ENCODE measurements at regions of chr6 and their contacts with region 1.

Region 1: GRCh38 chr6:33771146-33772081 is 17.5 kb downstream of the LEMD2 start:
- DNase-seq: peak; percentile 86 to 87
- H3K4me3 ChIP-seq: peak overlapping the region in 3 of 4 experiments; percentile 4 to 16 (median 14); a peak in 3 of 8 replicates
- H3K27ac ChIP-seq: no peak overlapping the region
- H3K4me1 ChIP-seq: peaks cover 10 to 32% (median 21%) of the 10 kb centered on the region in 4 experiments
- H3K27me3 ChIP-seq: no peaks in the 10 kb centered on the region
- CTCF ChIP-seq: peak in 2 of 3 experiments; percentile 76 to 95; a peak in 3 of 4 replicates
- EP300 ChIP-seq: no peak
- POLR2A ChIP-seq: 0 out of 3 replicates have a peak, but pooled peaks of 1 of the 2 experiments have one; percentile 45
- RAD21 ChIP-seq: peak; percentile 86 to 91

Region 2: GRCh38 chr6:33711140-33712129 is 60.0 kb before region 1 on chr6 and contains the start of gene UQCC2:
- CTCF ChIA-PET with region 1: interaction called, 28 read pairs
- POLR2A ChIA-PET with region 1: interaction called, 13 read pairs
- DNase-seq: peak; percentile 93 to 96
- H3K4me3 ChIP-seq: peak within 1 kb of the TSS; percentile 59 to 86 (median 77)
- H3K27ac ChIP-seq: peak within 1 kb of the TSS; percentile 98
- H3K4me1 ChIP-seq: peaks cover 2 to 14% (median 6%) of the 10 kb centered on the region in 4 experiments; a peak in 4 of 7 replicates
- H3K27me3 ChIP-seq: no peaks in the 10 kb centered on the region
- CTCF ChIP-seq: peak; percentile 62 to 76 (median 64)
- EP300 ChIP-seq: no peak
- POLR2A ChIP-seq: peak; percentile 78 to 92
- RAD21 ChIP-seq: peak; percentile 80 to 82
- total RNA-seq, gene UQCC2: 104 and 107 TPM in 2 replicates

Region 3: DNA sequence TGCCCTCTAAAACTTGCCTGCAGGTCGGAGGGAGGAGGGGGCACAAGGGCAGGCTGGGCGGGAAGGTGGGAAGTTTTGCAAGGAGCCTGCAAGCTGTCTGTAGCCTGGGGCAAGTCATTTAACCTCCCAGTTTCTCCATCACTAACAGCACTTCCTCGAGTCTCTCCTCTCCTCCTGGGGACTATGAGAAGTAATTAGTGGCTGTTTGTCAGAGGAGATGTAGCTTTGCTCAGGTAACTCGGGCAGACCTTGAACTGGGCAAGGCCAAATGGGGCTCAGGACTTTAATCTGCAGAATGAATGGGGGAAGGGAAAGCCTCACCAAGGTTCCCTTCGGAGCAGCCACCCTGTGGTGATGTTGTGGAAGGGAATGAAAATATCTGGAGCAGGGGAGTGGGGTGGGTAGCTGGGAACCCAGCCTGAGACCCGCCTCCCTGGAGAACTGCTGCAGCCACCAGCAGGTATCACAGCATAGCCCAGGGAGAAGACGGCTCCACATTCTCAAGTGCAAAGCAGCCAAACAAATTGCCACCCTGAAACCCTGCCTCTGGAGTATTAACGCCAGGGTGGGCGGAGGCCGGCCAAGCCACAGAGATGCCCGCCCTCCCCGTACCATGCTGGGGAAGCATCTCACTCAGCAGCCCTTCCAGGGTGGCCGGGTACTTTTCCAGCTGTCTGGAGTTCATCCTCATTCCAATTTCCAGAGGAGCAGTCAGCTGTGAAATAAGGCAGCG is 23.6 kb after region 1 on chr6:
- CTCF ChIA-PET with region 1: interaction called, 71 read pairs
- POLR2A ChIA-PET with region 1: interaction called, 9 read pairs
- DNase-seq: no peak
- H3K4me3 ChIP-seq: no peak overlapping the region
- H3K27ac ChIP-seq: no peak overlapping the region
- H3K4me1 ChIP-seq: peaks cover 8 to 39% (median 26%) of the 10 kb centered on the region in 4 experiments
- H3K27me3 ChIP-seq: no peaks in the 10 kb centered on the region
- CTCF ChIP-seq: peak in 1 of 3 experiments; percentile 1; a peak in 1 of 4 replicates
- EP300 ChIP-seq: no peak
- POLR2A ChIP-seq: no peak
- RAD21 ChIP-seq: no peak; a peak in 1 of 4 replicates

Region 4: DNA sequence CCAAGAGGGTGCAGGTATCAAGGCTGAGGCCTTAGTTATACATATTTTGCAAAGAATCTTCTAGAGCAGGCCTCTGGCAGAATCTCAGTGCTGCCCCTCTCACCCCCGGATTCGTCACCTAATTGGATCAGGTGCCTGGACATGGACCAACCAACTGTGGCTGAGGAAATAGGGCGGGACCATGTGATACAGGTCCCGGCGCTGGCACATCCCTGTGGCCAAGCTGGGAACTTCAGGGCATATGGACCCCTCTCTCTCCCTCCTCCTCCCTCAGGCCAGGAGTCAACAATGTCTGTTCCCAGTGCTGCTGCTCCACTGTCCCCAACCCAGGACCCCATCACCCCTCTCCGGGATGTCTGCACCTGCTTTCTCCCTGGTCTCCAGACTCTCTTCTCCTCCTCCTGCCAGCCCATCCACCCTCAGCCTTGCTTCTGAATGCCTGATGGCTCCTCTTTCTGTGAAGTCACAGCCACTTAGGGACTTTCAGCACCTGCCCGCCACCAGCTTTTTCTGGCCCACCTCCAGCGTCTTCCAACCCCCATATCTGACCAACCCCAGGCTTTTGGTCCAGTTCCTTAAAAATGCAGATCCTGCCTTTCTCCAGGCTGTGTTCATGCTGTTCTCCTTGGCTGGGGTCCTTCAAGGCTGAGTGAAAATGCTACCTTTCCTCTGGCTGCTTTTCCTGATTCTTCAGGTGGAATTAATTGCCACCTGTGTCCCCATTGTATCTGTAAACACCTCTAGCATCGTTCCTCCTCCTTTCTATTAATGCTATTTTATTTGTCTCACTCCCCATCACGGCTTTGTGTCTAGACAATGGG is 51.4 kb after region 1 on chr6:
- CTCF ChIA-PET with region 1: interaction called, 97 read pairs
- POLR2A ChIA-PET with region 1: interaction called, 4 read pairs
- DNase-seq: peak; percentile 41 to 72
- H3K4me3 ChIP-seq: no peak overlapping the region
- H3K27ac ChIP-seq: peak overlapping the region; percentile 10; the same call in 1 of the 2 replicates
- H3K4me1 ChIP-seq: peaks cover 0 to 11% (median 4%) of the 10 kb centered on the region in 4 experiments; a peak in 3 of 7 replicates
- H3K27me3 ChIP-seq: peaks cover 0 to 3% (median 1%) of the 10 kb centered on the region in 4 experiments; a peak in 4 of 7 replicates
- CTCF ChIP-seq: peak in 2 of 3 experiments; percentile 66 to 89; a peak in 3 of 4 replicates
- EP300 ChIP-seq: no peak
- POLR2A ChIP-seq: no peak
- RAD21 ChIP-seq: peak; percentile 41 to 60

Region 5: DNA sequence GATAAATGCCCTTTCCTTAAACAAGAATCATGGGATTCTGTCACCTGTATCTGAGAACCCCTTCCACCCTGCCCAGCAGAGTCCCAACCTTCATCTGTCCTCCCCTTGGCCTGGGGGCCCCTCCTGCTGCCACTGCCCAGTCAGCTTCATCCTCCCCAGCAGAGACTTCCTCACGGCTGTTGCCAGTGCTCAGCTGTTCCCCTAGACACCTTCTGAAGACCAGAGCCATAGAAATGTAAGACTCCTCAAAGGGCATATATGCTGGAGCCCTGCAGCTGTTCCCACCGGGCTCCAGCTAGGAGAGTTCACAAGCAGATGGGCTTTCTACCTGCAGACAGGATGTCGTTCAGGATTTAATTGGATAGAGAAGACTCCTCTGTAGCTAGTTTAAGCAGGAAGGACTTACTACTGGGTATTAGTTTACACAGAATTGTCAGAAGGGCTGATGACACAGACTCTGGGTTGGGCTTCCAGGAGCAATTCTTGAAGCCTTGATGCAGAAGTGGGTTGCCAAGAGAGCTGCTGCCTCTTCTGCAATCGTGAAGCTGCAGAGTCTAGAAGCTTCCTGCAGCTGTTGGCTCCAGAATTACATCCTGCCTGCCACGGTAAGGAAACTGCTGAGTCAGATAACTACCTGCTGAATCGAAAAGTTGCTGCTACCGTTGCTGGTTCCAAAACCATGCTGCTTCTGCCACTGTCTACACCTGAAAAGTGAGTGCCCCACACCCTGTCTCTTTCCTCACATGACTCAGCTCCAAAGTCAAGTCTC is 89.5 kb after region 1 on chr6:
- CTCF ChIA-PET with region 1: interaction called, 87 read pairs
- POLR2A ChIA-PET with region 1: interaction called, 3 read pairs
- DNase-seq: no peak
- H3K4me3 ChIP-seq: no peak overlapping the region
- H3K27ac ChIP-seq: no peak overlapping the region
- H3K4me1 ChIP-seq: no peaks in the 10 kb centered on the region; a peak in 1 of 7 replicates
- H3K27me3 ChIP-seq: 0 out of 7 replicates have a peak, but pooled peaks cover 0 to 1% (median 0%) of the 10 kb centered on the region in 4 experiments
- CTCF ChIP-seq: no peak
- EP300 ChIP-seq: no peak
- POLR2A ChIP-seq: no peak
- RAD21 ChIP-seq: no peak

Region 6: DNA sequence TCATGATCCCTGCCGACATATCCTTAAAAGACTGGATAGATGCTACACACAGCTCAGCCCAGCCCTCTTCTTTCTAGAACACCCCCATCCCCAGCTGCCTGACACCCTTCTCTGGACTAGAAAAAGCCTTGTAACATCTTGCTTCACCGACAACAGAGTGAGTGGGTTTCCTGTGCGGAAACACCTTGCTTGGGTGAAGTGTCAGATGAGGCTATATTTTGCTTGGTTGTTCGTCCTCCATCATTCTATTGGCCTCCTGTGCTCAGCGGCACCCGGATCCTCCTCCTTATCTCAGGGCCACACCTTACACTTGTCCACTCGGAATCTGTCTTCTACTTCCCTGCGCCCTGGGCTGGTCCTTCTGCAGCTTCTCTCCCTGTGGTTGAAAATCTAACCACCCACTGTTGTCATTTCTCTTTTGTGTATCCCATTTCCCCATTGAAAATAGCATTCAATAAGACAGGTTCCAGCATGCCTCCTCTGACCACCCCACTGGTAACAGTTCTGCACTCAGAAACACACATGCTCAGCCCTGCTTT is 133.7 kb after region 1 on chr6:
- CTCF ChIA-PET with region 1: no interaction called
- POLR2A ChIA-PET with region 1: no interaction called
- DNase-seq: no peak
- H3K4me3 ChIP-seq: no peak overlapping the region
- H3K27ac ChIP-seq: no peak overlapping the region
- H3K4me1 ChIP-seq: peaks cover 0 to 5% (median under 1%) of the 10 kb centered on the region in 4 experiments; a peak in 2 of 7 replicates
- H3K27me3 ChIP-seq: no peaks in the 10 kb centered on the region; a peak in 3 of 7 replicates
- CTCF ChIP-seq: no peak
- EP300 ChIP-seq: no peak
- POLR2A ChIP-seq: no peak
- RAD21 ChIP-seq: no peak

Region 7: GRCh38 chr6:34027445-34027936 is 256.1 kb after region 1 on chr6:
- CTCF ChIA-PET with region 1: interaction called, 48 read pairs
- POLR2A ChIA-PET with region 1: no interaction called
- DNase-seq: peak; percentile 29 to 97
- H3K4me3 ChIP-seq: no peak overlapping the region
- H3K27ac ChIP-seq: no peak overlapping the region
- H3K4me1 ChIP-seq: peaks cover 0 to 2% (median 0%) of the 10 kb centered on the region in 4 experiments; a peak in 1 of 7 replicates
- H3K27me3 ChIP-seq: no peaks in the 10 kb centered on the region
- CTCF ChIP-seq: peak in 2 of 3 experiments; percentile 86 to 98; a peak in 3 of 4 replicates
- EP300 ChIP-seq: no peak
- POLR2A ChIP-seq: no peak
- RAD21 ChIP-seq: peak; percentile 89 to 93

Measured in H1 (cell line).